ENCODE measurements at regions of chr1 and their contacts with region 1.

Region 1: GRCh38 chr1:223087291-223088255 is 55.5 kb downstream of the TLR5 start:
- H3K4me3 ChIP-seq: no peak overlapping the region
- H3K27ac ChIP-seq: no peak overlapping the region
- H3K4me1 ChIP-seq: no peaks in the 10 kb centered on the region
- CTCF ChIP-seq: no peak

Region 2: GRCh38 chr1:222792744-222793143 is 294.8 kb before region 1 on chr1:
- CTCF ChIA-PET with region 1: interaction called, 22 read pairs
- POLR2A ChIA-PET with region 1: no interaction called
- H3K4me3 ChIP-seq: no peak overlapping the region
- H3K27ac ChIP-seq: no peak overlapping the region
- H3K4me1 ChIP-seq: no peaks in the 10 kb centered on the region
- CTCF ChIP-seq: peak; percentile 51; the same call in 1 of the 2 replicates

Region 3: GRCh38 chr1:223074445-223075300 is 12.9 kb before region 1 on chr1:
- CTCF ChIA-PET with region 1: interaction called, 26 read pairs
- POLR2A ChIA-PET with region 1: no interaction called
- H3K4me3 ChIP-seq: no peak overlapping the region
- H3K27ac ChIP-seq: no peak overlapping the region
- H3K4me1 ChIP-seq: no peaks in the 10 kb centered on the region
- CTCF ChIP-seq: no peak; the same call in 1 of the 2 replicates

Region 4: GRCh38 chr1:223102797-223103533 is 15.4 kb after region 1 on chr1:
- CTCF ChIA-PET with region 1: interaction called, 85 read pairs
- POLR2A ChIA-PET with region 1: interaction called, 8 read pairs
- H3K4me3 ChIP-seq: no peak overlapping the region
- H3K27ac ChIP-seq: peak overlapping the region; percentile 58; the same call in 1 of the 2 replicates
- H3K4me1 ChIP-seq: peaks cover 11% of the 10 kb centered on the region
- CTCF ChIP-seq: no peak

Region 5: GRCh38 chr1:223114871-223115270 is 27.3 kb after region 1 on chr1:
- CTCF ChIA-PET with region 1: interaction called, 26 read pairs
- POLR2A ChIA-PET with region 1: no interaction called
- H3K4me3 ChIP-seq: no peak overlapping the region
- H3K27ac ChIP-seq: no peak overlapping the region
- H3K4me1 ChIP-seq: no peaks in the 10 kb centered on the region
- CTCF ChIP-seq: no peak

Region 6: GRCh38 chr1:223175032-223175431 is 87.5 kb after region 1 on chr1:
- CTCF ChIA-PET with region 1: no interaction called
- POLR2A ChIA-PET with region 1: no interaction called
- H3K4me3 ChIP-seq: no peak overlapping the region
- H3K27ac ChIP-seq: no peak overlapping the region
- H3K4me1 ChIP-seq: no peaks in the 10 kb centered on the region
- CTCF ChIP-seq: no peak; the same call in 1 of the 2 replicates